H1 (cell line): ENCODE measurements at regions of chr1 and their contacts with region 1.

Region 1: DNA sequence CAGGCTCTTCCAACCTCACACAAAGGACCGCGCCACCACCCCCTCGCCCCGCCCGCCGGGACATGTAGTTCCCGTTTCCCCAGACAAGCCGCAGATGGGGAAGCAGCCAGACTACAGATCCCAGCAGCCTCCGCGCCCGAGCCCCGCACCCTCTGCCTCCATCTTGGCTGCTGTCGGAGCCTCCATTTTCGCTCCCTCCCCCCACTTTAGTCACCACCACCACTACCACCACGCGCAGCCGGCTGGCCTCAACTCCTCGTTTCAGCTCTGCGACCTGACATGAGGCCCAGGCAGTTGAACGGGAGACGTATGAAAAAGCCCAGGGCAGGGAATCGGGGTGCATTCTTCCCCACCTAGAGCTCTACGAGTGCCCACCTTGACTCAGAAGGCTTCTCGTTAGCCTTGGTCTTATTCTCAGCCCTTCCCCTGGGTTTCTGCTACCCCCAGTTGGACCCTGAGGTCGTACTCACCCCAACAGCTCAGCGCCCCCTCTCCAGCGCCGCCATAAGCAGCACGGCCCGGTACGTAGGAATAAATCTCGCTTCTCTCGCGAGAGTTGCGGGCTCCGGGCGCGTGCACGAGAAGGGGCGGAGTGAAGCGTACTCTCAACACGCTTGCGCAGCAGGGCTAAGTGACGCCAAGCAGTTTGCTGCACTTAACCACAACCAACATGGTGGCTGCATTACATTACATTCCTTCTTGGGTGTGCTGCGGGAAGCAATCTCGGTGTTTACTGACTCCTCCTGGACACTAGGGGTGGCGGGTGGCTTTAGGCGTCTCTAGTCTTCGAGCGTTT is at the start of gene CSDE1:
- DNase-seq: peak; percentile 95 to 96
- H3K4me3 ChIP-seq: peak within 1 kb of the TSS; percentile 87 to 100 (median 98)
- H3K27ac ChIP-seq: peak within 1 kb of the TSS; percentile 100
- H3K4me1 ChIP-seq: peaks cover 0 to 11% (median 3%) of the 10 kb centered on the region in 4 experiments; a peak in 2 of 7 replicates
- H3K27me3 ChIP-seq: no peaks in the 10 kb centered on the region
- CTCF ChIP-seq: peak; percentile 50 to 76 (median 67)
- EP300 ChIP-seq: 0 out of 3 replicates have a peak, but pooled peaks of 1 of the 2 experiments have one; percentile 25
- POLR2A ChIP-seq: peak; percentile 95 to 96
- RAD21 ChIP-seq: peak; percentile 46 to 63
- total RNA-seq, gene CSDE1: 635 and 641 TPM in 2 replicates

Region 2: GRCh38 chr1:114716304-114717170 is 41.1 kb before region 1 on chr1 and contains the start of gene NRAS:
- CTCF ChIA-PET with region 1: no interaction called
- POLR2A ChIA-PET with region 1: interaction called, 28 read pairs
- DNase-seq: peak; percentile 73 to 98
- H3K4me3 ChIP-seq: peak within 1 kb of the TSS; percentile 97 to 98 (median 97)
- H3K27ac ChIP-seq: peak within 1 kb of the TSS; percentile 95
- H3K4me1 ChIP-seq: no peaks in the 10 kb centered on the region; a peak in 1 of 7 replicates
- H3K27me3 ChIP-seq: no peaks in the 10 kb centered on the region
- CTCF ChIP-seq: no peak
- EP300 ChIP-seq: peak in 1 of 2 experiments; percentile 57; a peak in 1 of 3 replicates
- POLR2A ChIP-seq: peak; percentile 62 to 91
- RAD21 ChIP-seq: no peak
- total RNA-seq, gene NRAS: 63.2 and 65.1 TPM in 2 replicates

Region 3: DNA sequence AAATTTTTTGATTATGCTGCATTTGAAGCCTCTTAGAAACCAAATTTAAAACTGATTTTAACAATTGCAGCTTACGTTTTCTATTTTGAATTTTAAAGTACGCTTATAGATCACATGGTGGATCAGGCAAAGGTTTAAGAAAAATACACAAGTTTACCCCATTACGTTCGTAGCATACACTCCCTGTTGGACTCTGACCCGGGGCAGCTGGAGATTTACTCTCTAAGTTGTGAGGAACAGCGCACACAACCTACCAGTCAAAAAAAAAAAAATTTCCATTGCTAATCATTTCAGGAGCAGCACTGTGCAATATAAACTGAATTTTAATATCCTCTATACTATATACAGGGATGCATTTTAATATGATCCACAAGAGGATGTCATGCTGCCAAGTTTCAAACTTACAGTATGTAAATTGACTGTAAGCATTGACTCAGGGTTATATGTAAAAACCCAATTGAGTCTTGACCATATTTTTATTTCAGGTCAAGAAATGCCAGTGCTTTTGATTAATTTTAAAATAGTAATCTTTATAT is 20.3 kb before region 1 on chr1:
- CTCF ChIA-PET with region 1: interaction called, 3 read pairs
- POLR2A ChIA-PET with region 1: interaction called, 68 read pairs
- DNase-seq: no peak
- H3K4me3 ChIP-seq: no peak overlapping the region
- H3K27ac ChIP-seq: no peak overlapping the region
- H3K4me1 ChIP-seq: no peaks in the 10 kb centered on the region
- H3K27me3 ChIP-seq: no peaks in the 10 kb centered on the region
- CTCF ChIP-seq: no peak
- EP300 ChIP-seq: no peak
- POLR2A ChIP-seq: no peak
- RAD21 ChIP-seq: no peak

Region 4: DNA sequence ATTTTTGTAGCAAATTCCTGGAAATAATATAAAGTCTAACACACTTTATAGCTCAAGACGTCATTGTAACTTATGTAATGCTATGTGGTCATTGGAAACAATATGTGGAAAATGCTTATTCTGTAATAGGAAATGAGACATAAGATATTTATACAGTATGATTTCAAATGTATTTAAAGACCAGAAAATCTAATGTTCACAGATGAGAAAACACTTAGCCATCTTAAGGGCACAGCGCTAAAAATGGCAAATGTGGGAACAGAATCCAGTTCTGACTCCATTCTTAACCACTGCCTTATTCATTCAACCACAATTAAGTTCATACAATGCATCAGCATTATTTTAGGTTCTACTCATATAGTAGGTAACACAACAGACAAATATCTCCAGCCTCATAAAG is 12.4 kb before region 1 on chr1:
- CTCF ChIA-PET with region 1: interaction called, 4 read pairs
- POLR2A ChIA-PET with region 1: interaction called, 68 read pairs
- DNase-seq: no peak
- H3K4me3 ChIP-seq: no peak overlapping the region
- H3K27ac ChIP-seq: no peak overlapping the region
- H3K4me1 ChIP-seq: no peaks in the 10 kb centered on the region
- H3K27me3 ChIP-seq: no peaks in the 10 kb centered on the region
- CTCF ChIP-seq: no peak
- EP300 ChIP-seq: no peak
- POLR2A ChIP-seq: no peak
- RAD21 ChIP-seq: no peak

Region 5: GRCh38 chr1:114771992-114772391 is 14.3 kb after region 1 on chr1:
- CTCF ChIA-PET with region 1: interaction called, 6 read pairs
- POLR2A ChIA-PET with region 1: interaction called, 16 read pairs
- DNase-seq: no peak
- H3K4me3 ChIP-seq: no peak overlapping the region
- H3K27ac ChIP-seq: no peak overlapping the region
- H3K4me1 ChIP-seq: no peaks in the 10 kb centered on the region
- H3K27me3 ChIP-seq: no peaks in the 10 kb centered on the region
- CTCF ChIP-seq: no peak
- EP300 ChIP-seq: no peak
- POLR2A ChIP-seq: no peak
- RAD21 ChIP-seq: no peak

Region 6: DNA sequence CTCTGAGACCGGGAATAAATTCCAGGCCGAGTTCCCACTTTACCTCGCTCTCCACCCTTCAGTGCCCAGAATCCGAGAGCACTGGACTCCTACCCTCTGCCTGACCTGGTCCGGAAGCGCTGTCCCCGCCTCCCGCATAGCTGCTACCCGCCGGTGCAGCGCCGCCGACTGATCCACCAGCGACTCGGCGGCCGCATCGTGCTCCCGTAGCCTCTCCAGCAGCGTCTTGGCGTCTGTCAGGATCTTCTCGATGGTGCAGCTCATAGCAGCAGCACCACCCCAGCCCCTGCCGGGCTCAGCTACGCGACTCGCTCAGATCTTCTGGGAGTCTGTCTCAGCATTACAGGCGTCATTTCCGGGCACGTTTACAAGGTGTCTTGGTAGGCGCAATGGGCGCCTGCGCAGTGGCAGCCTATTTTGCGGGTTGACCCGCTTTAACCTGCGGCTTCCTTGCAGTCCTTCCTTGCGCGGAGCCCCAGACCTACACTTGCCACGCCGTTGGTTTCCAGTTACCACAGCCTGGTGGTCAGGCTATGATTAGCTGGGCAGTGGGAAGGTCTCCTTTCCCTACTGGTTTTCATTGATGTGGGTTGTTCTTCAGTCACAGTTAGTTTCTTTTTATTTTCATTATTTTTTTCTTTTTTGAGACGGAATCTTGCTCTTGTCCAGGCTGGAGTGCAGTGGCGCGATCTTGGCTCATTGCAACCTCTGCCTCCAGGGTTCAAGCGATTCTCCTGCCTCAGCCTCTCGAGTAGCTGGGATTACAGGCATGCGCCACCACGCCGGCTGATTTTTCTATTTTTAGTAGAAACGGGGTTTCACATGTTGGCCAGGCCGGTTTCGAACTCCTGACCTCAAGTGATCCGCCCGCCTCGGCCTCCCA is 22.9 kb after region 1 on chr1 and contains the start of gene SIKE1:
- CTCF ChIA-PET with region 1: no interaction called
- POLR2A ChIA-PET with region 1: interaction called, 10 read pairs
- DNase-seq: peak; percentile 88 to 89
- H3K4me3 ChIP-seq: peak within 1 kb of the TSS; percentile 68 to 95 (median 86)
- H3K27ac ChIP-seq: peak within 1 kb of the TSS; percentile 79
- H3K4me1 ChIP-seq: no peaks in the 10 kb centered on the region
- H3K27me3 ChIP-seq: peaks cover 0 to 9% (median 2%) of the 10 kb centered on the region in 4 experiments; a peak in 3 of 7 replicates
- CTCF ChIP-seq: no peak
- EP300 ChIP-seq: no peak
- POLR2A ChIP-seq: peak in 1 of 2 experiments; percentile 96; a peak in 2 of 3 replicates
- RAD21 ChIP-seq: peak; percentile 3 to 4; a peak in 1 of 4 replicates
- total RNA-seq, gene SIKE1: 73.2 and 79.9 TPM in 2 replicates

Region 7: GRCh38 chr1:114849975-114850374 is 92.3 kb after region 1 on chr1:
- CTCF ChIA-PET with region 1: no interaction called
- POLR2A ChIA-PET with region 1: no interaction called
- DNase-seq: no peak
- H3K4me3 ChIP-seq: no peak overlapping the region
- H3K27ac ChIP-seq: no peak overlapping the region
- H3K4me1 ChIP-seq: no peaks in the 10 kb centered on the region
- H3K27me3 ChIP-seq: peaks cover 0 to 9% (median 5%) of the 10 kb centered on the region in 4 experiments; a peak in 5 of 7 replicates
- CTCF ChIP-seq: no peak
- EP300 ChIP-seq: no peak
- POLR2A ChIP-seq: no peak
- RAD21 ChIP-seq: no peak

Region 8: DNA sequence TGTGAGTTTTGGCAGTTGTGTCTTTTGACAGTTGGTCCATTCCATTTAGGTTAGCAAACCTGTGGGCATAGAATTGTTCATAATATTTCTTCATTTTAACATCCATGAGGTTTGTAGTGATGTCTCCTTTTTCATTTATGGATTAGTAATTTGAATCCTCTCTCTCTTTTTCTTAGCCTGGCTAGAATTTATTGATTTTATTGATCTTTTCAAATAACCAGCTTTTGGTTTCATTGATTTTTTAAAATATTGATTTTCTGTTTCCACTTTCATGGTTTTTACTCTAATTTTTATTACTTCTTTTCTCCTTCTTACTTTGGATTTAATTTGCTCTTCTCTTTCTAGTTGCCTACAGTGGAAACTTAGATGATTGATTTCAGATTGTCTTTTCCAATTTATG is 111.1 kb after region 1 on chr1:
- CTCF ChIA-PET with region 1: no interaction called
- POLR2A ChIA-PET with region 1: no interaction called
- DNase-seq: no peak
- H3K4me3 ChIP-seq: no peak overlapping the region
- H3K27ac ChIP-seq: no peak overlapping the region
- H3K4me1 ChIP-seq: no peaks in the 10 kb centered on the region
- H3K27me3 ChIP-seq: no peaks in the 10 kb centered on the region
- CTCF ChIP-seq: no peak
- EP300 ChIP-seq: no peak
- POLR2A ChIP-seq: no peak
- RAD21 ChIP-seq: no peak

Region 9: GRCh38 chr1:115189814-115190539 is 432.3 kb after region 1 on chr1:
- CTCF ChIA-PET with region 1: no interaction called
- POLR2A ChIA-PET with region 1: no interaction called
- DNase-seq: no peak
- H3K4me3 ChIP-seq: no peak overlapping the region
- H3K27ac ChIP-seq: no peak overlapping the region
- H3K4me1 ChIP-seq: no peaks in the 10 kb centered on the region
- H3K27me3 ChIP-seq: no peaks in the 10 kb centered on the region
- CTCF ChIP-seq: no peak
- EP300 ChIP-seq: no peak
- POLR2A ChIP-seq: no peak
- RAD21 ChIP-seq: no peak

Region 10: DNA sequence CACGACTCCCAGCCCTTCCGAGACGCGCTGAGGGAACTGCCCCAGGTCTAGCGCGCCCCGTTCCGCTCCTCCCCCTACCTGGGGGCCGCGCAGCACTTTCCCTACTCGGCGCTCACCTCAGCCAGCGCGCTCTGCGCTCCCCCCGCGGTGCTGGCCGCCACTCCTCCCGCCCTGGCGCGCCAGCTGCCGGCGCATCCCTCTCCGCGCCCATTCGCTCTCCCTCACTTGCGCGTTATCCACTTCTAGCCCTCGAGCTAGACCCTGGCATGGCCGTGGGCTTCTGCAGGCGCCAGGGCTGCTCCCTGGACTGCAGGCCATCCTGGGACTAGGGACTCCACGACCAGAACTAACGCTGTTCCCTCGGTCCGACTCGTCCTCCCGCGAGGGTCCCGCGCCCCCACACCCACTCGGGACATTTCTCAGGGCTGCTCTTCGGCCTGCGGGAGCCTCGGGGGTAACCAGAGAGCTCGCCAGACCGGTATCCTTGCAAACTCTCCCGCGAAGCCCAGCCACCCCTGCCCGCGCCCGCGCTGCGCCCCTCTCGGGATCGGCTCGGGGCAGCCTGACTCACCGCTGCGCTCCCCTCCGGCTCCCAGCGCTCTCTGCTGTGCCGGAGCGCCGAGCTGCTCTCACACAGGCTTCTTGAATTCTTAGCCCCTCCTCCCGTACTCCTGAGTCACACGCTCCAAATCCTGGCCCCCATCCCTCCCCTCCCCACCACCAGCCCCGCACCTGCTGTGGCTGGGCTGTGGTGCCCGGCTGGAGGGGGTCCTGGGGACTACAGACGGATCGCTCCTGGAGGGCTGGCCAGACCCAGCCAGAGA is 580.2 kb after region 1 on chr1 and contains the start of gene NGF:
- CTCF ChIA-PET with region 1: no interaction called
- POLR2A ChIA-PET with region 1: no interaction called
- DNase-seq: peak; percentile 63 to 82
- H3K4me3 ChIP-seq: peak within 1 kb of the TSS; percentile 55 to 83 (median 72)
- H3K27ac ChIP-seq: no peak within 1 kb of the TSS
- H3K4me1 ChIP-seq: peaks cover 0 to 7% (median 0%) of the 10 kb centered on the region in 4 experiments; a peak in 4 of 7 replicates
- H3K27me3 ChIP-seq: peaks cover 7 to 38% (median 29%) of the 10 kb centered on the region in 4 experiments
- CTCF ChIP-seq: no peak
- EP300 ChIP-seq: no peak
- POLR2A ChIP-seq: peak in 1 of 2 experiments; percentile 55; a peak in 1 of 3 replicates
- RAD21 ChIP-seq: no peak
- total RNA-seq, gene NGF: 0.63 TPM in 1 of 2 replicates, not detected in the other